ENCODE measurements at regions of chr11 and their contacts with region 1.

Region 1: DNA sequence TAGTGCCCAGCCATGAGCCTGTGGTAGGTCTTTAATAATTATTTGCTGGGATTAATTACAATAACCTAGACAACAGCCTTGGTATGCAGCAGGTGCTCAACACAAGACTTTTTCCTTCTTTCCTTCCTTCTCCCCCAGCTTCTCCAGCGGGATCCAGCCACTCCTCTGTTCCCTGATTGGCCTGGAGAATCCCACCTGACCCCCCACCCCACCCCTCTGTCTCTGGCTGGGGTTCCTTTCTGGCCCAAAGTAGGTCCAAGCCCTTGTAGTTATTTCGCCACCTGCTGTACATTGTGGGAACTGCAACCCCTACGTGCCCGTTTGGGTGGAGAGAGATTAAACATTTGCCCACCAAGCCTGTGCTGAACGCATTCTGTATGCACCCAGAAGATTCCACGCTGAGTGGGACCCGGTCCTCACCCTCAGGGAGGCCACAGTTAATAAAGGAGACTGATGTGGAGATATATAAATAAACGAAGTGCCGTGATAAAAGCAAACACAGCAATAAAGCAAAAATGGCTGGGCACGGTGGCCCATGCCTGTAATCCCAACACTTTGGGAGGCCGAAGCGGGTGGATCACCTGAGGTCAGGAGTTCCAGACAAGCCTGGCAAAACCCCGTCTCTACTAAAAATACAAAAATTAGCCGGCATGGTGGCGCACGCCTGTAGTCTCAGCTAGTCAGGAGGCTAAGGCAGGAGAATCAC is 32.1 kb upstream of the DGKZ start:
- DNase-seq: peak; percentile 85 to 87
- H3K4me3 ChIP-seq: no peak overlapping the region
- H3K4me3 Mint-ChIP-seq: no peak overlapping the region
- H3K27ac Mint-ChIP-seq: peak overlapping the region; percentile 14
- H3K4me1 ChIP-seq: no peaks in the 10 kb centered on the region
- H3K4me1 Mint-ChIP-seq: no peaks in the 10 kb centered on the region
- H3K27me3 ChIP-seq: no peaks in the 10 kb centered on the region
- H3K27me3 Mint-ChIP-seq: no peaks in the 10 kb centered on the region
- CTCF ChIP-seq: peak; percentile 92 to 97

Region 2: DNA sequence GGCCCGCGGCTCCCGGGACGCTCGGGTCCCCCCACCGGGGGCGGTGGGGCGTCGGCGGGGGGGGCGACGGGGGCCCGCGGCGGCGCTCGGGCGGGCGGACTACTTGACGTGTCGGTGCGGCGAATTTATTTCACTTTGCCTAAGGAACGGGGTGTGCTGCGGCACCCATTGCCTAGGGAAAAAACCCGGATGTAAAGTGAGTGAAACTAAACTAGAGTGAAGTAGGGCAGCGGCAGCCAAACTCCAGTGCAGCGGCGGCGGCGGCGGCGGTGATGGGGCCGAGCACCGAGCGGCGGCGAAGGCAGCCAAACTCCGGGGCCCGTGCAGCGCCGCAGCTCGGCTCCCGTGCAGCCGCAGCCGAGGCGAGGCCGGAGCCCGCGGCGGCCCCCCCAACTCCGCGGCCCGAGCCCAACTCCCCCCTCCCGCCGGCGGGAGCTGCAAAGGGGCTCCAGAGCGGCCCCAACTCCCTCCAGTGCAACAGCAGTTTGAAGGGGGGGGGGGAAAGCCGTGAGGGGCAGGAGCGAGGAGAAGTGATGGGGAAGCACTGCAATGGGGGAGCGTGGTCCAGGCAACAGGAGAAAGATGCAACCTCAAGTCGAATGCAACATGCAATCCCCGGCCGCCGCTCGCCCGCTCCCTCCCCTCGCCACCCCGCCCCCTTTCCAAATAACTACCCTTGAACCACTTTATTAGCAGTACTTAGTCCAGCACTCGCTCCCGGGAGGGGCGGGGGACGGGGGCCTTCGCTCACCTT is 193.3 kb before region 1 on chr11:
- CTCF ChIA-PET with region 1: no interaction called
- POLR2A ChIA-PET with region 1: interaction called, 3 read pairs
- intact Hi-C with region 1: loop called (anchors 10 kb)
- DNase-seq: peak; percentile 81 to 84
- H3K4me3 ChIP-seq: peak overlapping the region; percentile 85
- H3K4me3 Mint-ChIP-seq: peak overlapping the region; percentile 94
- H3K27ac Mint-ChIP-seq: peak overlapping the region; percentile 53
- H3K4me1 ChIP-seq: peaks cover 7% of the 10 kb centered on the region
- H3K4me1 Mint-ChIP-seq: peaks cover 16% of the 10 kb centered on the region
- H3K27me3 ChIP-seq: no peaks in the 10 kb centered on the region
- H3K27me3 Mint-ChIP-seq: no peaks in the 10 kb centered on the region
- CTCF ChIP-seq: no peak

Region 3: DNA sequence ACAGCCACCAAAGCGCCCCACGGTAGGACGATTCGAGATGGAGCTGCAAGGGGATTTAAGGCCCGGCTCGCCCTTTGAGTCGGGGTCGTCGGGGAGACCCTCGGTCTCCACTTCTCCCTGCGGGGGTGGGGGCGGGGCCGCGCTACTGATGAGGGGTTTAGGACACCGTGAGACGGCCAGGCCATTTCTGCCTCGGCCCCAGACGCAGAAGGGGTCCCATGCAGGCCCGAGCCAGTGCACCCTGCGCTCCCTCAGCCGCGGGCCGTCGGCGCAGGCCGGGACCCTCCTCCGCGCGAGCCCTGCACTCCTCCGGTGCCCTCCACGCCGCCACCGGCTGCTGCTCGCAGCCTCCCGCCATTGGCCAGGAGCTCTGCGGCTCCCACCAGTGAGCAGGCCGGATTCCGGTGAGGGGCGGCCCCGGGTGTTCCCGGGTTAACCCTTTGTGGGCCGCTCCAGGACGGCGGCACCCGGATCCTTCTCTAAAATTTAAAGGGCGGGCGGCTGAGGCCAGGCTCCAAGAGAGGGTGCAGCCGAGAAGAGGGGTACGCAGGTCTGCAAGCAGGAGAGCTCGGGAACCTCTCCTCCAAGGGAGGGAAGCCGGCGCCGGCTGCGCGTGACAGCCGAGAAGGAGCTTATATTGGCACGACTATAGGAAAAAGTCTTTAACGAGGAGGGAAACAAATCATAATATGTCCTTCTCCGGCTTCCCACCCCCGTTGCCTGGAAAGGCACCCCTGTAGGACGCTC is 19.7 kb before region 1 on chr11:
- CTCF ChIA-PET with region 1: interaction called, 3 read pairs
- POLR2A ChIA-PET with region 1: no interaction called
- intact Hi-C with region 1: loop called (anchors 1 kb)
- DNase-seq: no peak
- H3K4me3 ChIP-seq: no peak overlapping the region
- H3K4me3 Mint-ChIP-seq: peak overlapping the region; percentile 44
- H3K27ac Mint-ChIP-seq: peak overlapping the region; percentile 81
- H3K4me1 ChIP-seq: peaks cover 46% of the 10 kb centered on the region
- H3K4me1 Mint-ChIP-seq: peaks cover 19% of the 10 kb centered on the region
- H3K27me3 ChIP-seq: no peaks in the 10 kb centered on the region
- H3K27me3 Mint-ChIP-seq: no peaks in the 10 kb centered on the region
- CTCF ChIP-seq: no peak

Measured in Caco-2 (cell line).